ENCODE measurements at regions of chr16 and their contacts with region 1.

Region 1: GRCh38 chr16:78342336-78342735 is 242.9 kb downstream of the WWOX start:
- DNase-seq: no peak
- ATAC-seq: no peak
- H3K4me3 ChIP-seq: no peak overlapping the region
- H3K4me3 Mint-ChIP-seq: no peak overlapping the region
- H3K27ac ChIP-seq: no peak overlapping the region
- H3K27ac Mint-ChIP-seq: no peak overlapping the region
- H3K4me1 ChIP-seq: no peaks in the 10 kb centered on the region
- H3K4me1 Mint-ChIP-seq: no peaks in the 10 kb centered on the region
- H3K27me3 ChIP-seq: no peaks in the 10 kb centered on the region
- H3K27me3 Mint-ChIP-seq: no peaks in the 10 kb centered on the region

Region 2: GRCh38 chr16:78375055-78375679 is 32.8 kb after region 1 on chr16:
- CTCF ChIA-PET with region 1: no interaction called
- POLR2A ChIA-PET with region 1: interaction called in 1 of 2 experiments, 11 read pairs
- DNase-seq: no peak
- ATAC-seq: no peak
- H3K4me3 ChIP-seq: no peak overlapping the region
- H3K4me3 Mint-ChIP-seq: no peak overlapping the region
- H3K27ac ChIP-seq: no peak overlapping the region
- H3K27ac Mint-ChIP-seq: no peak overlapping the region
- H3K4me1 ChIP-seq: no peaks in the 10 kb centered on the region
- H3K4me1 Mint-ChIP-seq: no peaks in the 10 kb centered on the region
- H3K27me3 ChIP-seq: no peaks in the 10 kb centered on the region
- H3K27me3 Mint-ChIP-seq: no peaks in the 10 kb centered on the region

Region 3: DNA sequence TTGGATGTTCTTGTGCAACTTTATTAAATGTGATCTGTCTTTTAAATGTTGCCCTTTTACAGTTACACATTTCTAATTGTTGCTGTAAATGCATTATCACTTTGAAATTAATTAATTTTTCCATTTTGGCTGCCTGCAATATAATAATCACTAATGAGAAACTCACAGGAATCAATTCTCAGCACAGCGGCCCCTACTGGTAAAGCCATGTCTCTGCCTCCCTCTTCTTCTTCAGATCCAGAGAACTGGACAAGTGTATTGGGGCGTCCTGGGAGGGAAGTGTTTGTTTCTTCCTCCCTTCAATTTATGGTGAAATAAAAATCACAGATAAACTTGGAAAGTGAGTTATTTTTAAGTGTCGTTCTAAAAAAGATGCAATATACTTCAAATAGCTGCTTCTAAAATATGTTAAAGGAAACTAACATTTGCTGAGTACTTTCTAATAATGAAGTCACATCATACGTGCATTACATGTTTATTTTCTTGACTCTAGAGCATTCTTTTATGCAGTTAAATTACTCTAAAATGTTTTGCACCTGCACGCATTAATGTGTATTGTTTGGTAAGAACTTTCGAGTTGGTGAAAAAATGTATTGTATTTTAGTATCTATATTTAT is 95.1 kb after region 1 on chr16:
- CTCF ChIA-PET with region 1: no interaction called
- POLR2A ChIA-PET with region 1: no interaction called
- DNase-seq: peak in 19 of 35 experiments; percentile 0 to 46 (median 11)
- ATAC-seq: no peak
- H3K4me3 ChIP-seq: no peak overlapping the region
- H3K4me3 Mint-ChIP-seq: no peak overlapping the region
- H3K27ac ChIP-seq: no peak overlapping the region
- H3K27ac Mint-ChIP-seq: no peak overlapping the region
- H3K4me1 ChIP-seq: no peaks in the 10 kb centered on the region
- H3K4me1 Mint-ChIP-seq: no peaks in the 10 kb centered on the region
- H3K27me3 ChIP-seq: no peaks in the 10 kb centered on the region
- H3K27me3 Mint-ChIP-seq: no peaks in the 10 kb centered on the region

Measured in T-cell (primary cell).